Left ventricle myocardium superior (tissue), 1 donor: ENCODE measurements at regions of chr17 and their contacts with region 1.

Region 1: DNA sequence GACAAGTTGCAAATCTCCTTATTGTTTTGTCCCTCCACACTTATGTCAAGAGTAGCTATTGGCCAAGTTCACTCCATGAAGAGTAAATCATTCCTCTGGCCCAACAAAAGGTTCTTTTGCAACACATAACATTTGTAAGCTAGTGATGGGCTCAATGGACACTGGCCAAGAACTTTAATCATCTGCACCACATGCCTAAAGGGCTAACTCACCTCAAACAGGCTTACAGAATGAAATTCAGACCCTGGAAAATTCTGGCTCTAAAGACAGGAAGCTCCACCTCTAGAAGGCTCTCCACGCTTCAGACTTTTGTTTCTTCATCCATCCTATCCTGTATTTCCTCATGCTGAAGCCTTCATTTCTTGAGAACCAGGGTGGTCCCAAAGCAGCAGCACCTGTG is 10.9 kb upstream of the ANKFN1 start:
- DNase-seq: no peak
- ATAC-seq: no peak

Region 2: GRCh38 chr17:55437159-55437605 is 705.1 kb before region 1 on chr17:
- intact Hi-C with region 1: no loop called
- DNase-seq: no peak
- ATAC-seq: peak; percentile 43

Region 3: DNA sequence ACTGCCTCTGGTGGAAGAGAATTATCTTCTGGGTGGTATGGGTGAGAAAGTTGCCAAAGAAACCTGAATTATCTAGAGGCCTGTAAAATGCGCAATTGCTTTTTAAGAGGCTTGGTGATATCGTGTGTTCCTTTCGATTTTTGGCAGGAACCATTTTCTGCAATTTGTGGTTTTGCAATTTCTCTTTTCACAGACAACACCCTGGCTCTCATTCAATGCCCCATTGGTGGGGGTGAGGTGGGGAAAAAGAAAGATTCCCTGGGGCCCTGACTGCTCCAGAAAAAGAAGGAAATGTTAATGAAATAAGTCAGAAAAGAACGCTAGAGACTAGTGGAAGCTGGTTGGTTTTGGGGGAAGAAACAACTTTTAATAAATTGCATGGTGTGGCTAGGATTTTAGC is 88.3 kb after region 1 on chr17:
- intact Hi-C with region 1: loop called (anchors 10 kb)
- DNase-seq: no peak
- ATAC-seq: peak; percentile 51